ENCODE measurements at regions of chr1 and their contacts with region 1.

Region 1: GRCh38 chr1:50620680-50621329 is 197.6 kb upstream of the DMRTA2 start:
- DNase-seq: peak; percentile 33 to 65
- H3K4me3 ChIP-seq: no peak overlapping the region
- H3K27ac ChIP-seq: 0 out of 2 replicates have a peak overlapping the region, but pooled peaks have one; percentile 32
- H3K4me1 ChIP-seq: peaks cover 0 to 6% (median 0%) of the 10 kb centered on the region in 4 experiments; a peak in 4 of 7 replicates
- H3K27me3 ChIP-seq: no peaks in the 10 kb centered on the region
- CTCF ChIP-seq: peak in 2 of 3 experiments; percentile 70 to 77; a peak in 3 of 4 replicates
- EP300 ChIP-seq: no peak
- POLR2A ChIP-seq: no peak
- RAD21 ChIP-seq: peak; percentile 74 to 82

Region 2: GRCh38 chr1:50438945-50439344 is 181.9 kb before region 1 on chr1:
- CTCF ChIA-PET with region 1: interaction called, 10 read pairs
- POLR2A ChIA-PET with region 1: no interaction called
- DNase-seq: no peak
- H3K4me3 ChIP-seq: no peak overlapping the region
- H3K27ac ChIP-seq: no peak overlapping the region
- H3K4me1 ChIP-seq: no peaks in the 10 kb centered on the region
- H3K27me3 ChIP-seq: peaks cover 0 to 2% (median under 1%) of the 10 kb centered on the region in 4 experiments; a peak in 1 of 7 replicates
- CTCF ChIP-seq: peak in 2 of 3 experiments; percentile 9 to 48; a peak in 2 of 4 replicates
- EP300 ChIP-seq: no peak
- POLR2A ChIP-seq: no peak
- RAD21 ChIP-seq: peak; percentile 13 to 22; a peak in 2 of 4 replicates

Region 3: GRCh38 chr1:50633465-50633864 is 12.7 kb after region 1 on chr1:
- CTCF ChIA-PET with region 1: interaction called, 32 read pairs
- POLR2A ChIA-PET with region 1: interaction called, 4 read pairs
- DNase-seq: no peak
- H3K4me3 ChIP-seq: no peak overlapping the region
- H3K27ac ChIP-seq: no peak overlapping the region
- H3K4me1 ChIP-seq: no peaks in the 10 kb centered on the region; a peak in 1 of 7 replicates
- H3K27me3 ChIP-seq: no peaks in the 10 kb centered on the region
- CTCF ChIP-seq: no peak
- EP300 ChIP-seq: no peak
- POLR2A ChIP-seq: no peak
- RAD21 ChIP-seq: no peak

Region 4: GRCh38 chr1:50644447-50645105 is 23.8 kb after region 1 on chr1:
- CTCF ChIA-PET with region 1: interaction called, 18 read pairs
- POLR2A ChIA-PET with region 1: no interaction called
- DNase-seq: no peak
- H3K4me3 ChIP-seq: no peak overlapping the region
- H3K27ac ChIP-seq: no peak overlapping the region
- H3K4me1 ChIP-seq: no peaks in the 10 kb centered on the region
- H3K27me3 ChIP-seq: no peaks in the 10 kb centered on the region
- CTCF ChIP-seq: no peak
- EP300 ChIP-seq: no peak
- POLR2A ChIP-seq: no peak
- RAD21 ChIP-seq: no peak

Region 5: GRCh38 chr1:50704126-50704525 is 83.3 kb after region 1 on chr1:
- CTCF ChIA-PET with region 1: interaction called, 87 read pairs
- POLR2A ChIA-PET with region 1: interaction called, 6 read pairs
- DNase-seq: no peak
- H3K4me3 ChIP-seq: no peak overlapping the region
- H3K27ac ChIP-seq: no peak overlapping the region
- H3K4me1 ChIP-seq: peaks cover 0 to 26% (median 3%) of the 10 kb centered on the region in 4 experiments; a peak in 4 of 7 replicates
- H3K27me3 ChIP-seq: no peaks in the 10 kb centered on the region
- CTCF ChIP-seq: peak in 2 of 3 experiments; percentile 56 to 62; a peak in 2 of 4 replicates
- EP300 ChIP-seq: no peak
- POLR2A ChIP-seq: no peak
- RAD21 ChIP-seq: peak; percentile 64 to 65

Region 6: DNA sequence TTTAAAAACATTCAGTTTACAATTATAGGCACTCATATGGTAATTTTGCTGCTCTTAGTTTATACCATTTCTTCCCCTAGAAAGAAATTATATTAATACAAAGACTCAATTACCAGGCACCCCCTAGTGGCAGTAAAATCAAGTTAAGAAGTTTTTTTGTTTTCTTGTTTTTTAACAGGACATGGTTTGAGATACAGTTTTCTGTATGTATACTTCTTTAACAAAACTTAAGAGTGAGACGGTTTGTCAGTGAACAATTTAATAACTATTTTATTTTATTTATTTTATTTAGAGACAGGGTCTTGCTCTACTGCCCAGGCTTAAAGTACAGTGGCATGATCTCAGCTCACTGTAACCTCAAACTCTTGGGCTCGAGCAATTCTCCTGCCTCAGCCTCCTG is 114.6 kb after region 1 on chr1:
- CTCF ChIA-PET with region 1: interaction called, 17 read pairs
- POLR2A ChIA-PET with region 1: no interaction called
- DNase-seq: no peak
- H3K4me3 ChIP-seq: no peak overlapping the region
- H3K27ac ChIP-seq: no peak overlapping the region
- H3K4me1 ChIP-seq: no peaks in the 10 kb centered on the region
- H3K27me3 ChIP-seq: peaks cover 0 to 1% (median 0%) of the 10 kb centered on the region in 4 experiments; a peak in 1 of 7 replicates
- CTCF ChIP-seq: peak in 1 of 3 experiments; percentile 33; a peak in 1 of 4 replicates
- EP300 ChIP-seq: no peak
- POLR2A ChIP-seq: no peak
- RAD21 ChIP-seq: peak in 1 of 2 experiments; percentile 31; a peak in 3 of 4 replicates

Region 7: DNA sequence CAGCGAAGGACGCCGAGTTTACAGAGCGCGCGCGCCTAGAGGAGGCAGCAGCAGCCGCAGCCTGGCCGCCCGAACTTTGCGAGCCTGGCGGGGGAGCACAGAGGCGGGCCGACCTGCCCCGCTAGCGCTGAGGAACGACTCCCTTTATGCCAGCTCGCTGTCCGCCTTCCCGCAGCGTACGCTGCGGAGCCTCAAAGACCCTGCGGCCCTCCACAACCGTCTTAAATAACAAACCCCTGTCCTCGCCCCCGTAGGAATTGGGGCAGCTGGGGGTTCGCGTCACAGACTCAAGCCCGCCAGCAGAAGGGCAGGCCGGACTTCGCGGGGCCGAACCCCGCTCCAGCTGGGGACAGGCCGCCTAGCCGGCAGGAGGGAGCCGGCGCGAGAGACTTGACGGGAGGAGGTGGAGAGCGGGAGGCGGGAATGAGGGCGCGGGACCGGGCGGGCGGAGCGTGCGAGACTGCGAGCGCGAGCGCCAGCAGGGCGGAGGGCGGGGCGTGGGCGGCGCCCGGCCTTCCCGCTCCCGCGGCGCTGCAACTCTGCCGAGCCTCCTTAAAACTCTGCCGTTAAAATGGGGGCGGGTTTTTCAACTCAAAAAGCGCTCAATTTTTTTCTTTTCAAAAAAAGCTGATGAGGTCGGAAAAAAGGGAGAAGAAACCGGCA is 347.5 kb after region 1 on chr1:
- CTCF ChIA-PET with region 1: no interaction called
- POLR2A ChIA-PET with region 1: no interaction called
- DNase-seq: peak in 1 of 2 experiments; percentile 87
- H3K4me3 ChIP-seq: peak overlapping the region; percentile 47 to 66 (median 53)
- H3K27ac ChIP-seq: no peak overlapping the region
- H3K4me1 ChIP-seq: peaks cover 6 to 12% (median 9%) of the 10 kb centered on the region in 4 experiments
- H3K27me3 ChIP-seq: peaks cover 37 to 72% (median 55%) of the 10 kb centered on the region in 4 experiments
- CTCF ChIP-seq: peak; percentile 25 to 45 (median 32); a peak in 3 of 4 replicates
- EP300 ChIP-seq: no peak
- POLR2A ChIP-seq: no peak
- RAD21 ChIP-seq: peak; percentile 31 to 44; a peak in 3 of 4 replicates

Measured in H1 (cell line).